Transverse colon (tissue), 4 donors: ENCODE measurements at regions of chr9 and their contacts with region 1.

Region 1: GRCh38 chr9:128034821-128035764 is 32.0 kb downstream of the NAIF1 start:
- DNase-seq: peak; percentile 75
- H3K4me3 ChIP-seq: no peak overlapping the region
- H3K27ac ChIP-seq: peak overlapping the region in 2 of 4 donors; percentile 18 to 25
- H3K4me1 ChIP-seq: peaks cover 0 to 27% (median 7%) of the 10 kb centered on the region in 4 donors
- H3K27me3 ChIP-seq: no peaks in the 10 kb centered on the region
- CTCF ChIP-seq: peak; percentile 88 to 98 (median 92)
- EP300 ChIP-seq: no peak
- POLR2A ChIP-seq: no peak

Region 2: GRCh38 chr9:127828262-127829031 is 206.6 kb before region 1 on chr9:
- in situ Hi-C with region 1: no loop called
- intact Hi-C with region 1: no loop called
- DNase-seq: peak; percentile 79
- H3K4me3 ChIP-seq: peak overlapping the region in 3 of 4 donors; percentile 6 to 35 (median 12)
- H3K27ac ChIP-seq: peak overlapping the region; percentile 73 to 79 (median 77)
- H3K4me1 ChIP-seq: peaks cover 0 to 42% (median 13%) of the 10 kb centered on the region in 4 donors
- H3K27me3 ChIP-seq: peaks cover 14% of the 10 kb centered on the region
- CTCF ChIP-seq: no peak
- EP300 ChIP-seq: no peak
- POLR2A ChIP-seq: peak; percentile 57

Region 3: GRCh38 chr9:127943731-127944144 is 91.4 kb before region 1 on chr9:
- in situ Hi-C with region 1: loop called (anchors 5 to 10 kb)
- intact Hi-C with region 1: loop called (anchors 1 kb)
- DNase-seq: peak; percentile 87
- H3K4me3 ChIP-seq: no peak overlapping the region
- H3K27ac ChIP-seq: peak overlapping the region in 3 of 4 donors; percentile 2 to 37 (median 35)
- H3K4me1 ChIP-seq: peaks cover 0 to 5% (median 0%) of the 10 kb centered on the region in 4 donors
- H3K27me3 ChIP-seq: no peaks in the 10 kb centered on the region
- CTCF ChIP-seq: peak; percentile 89 to 97 (median 94)
- EP300 ChIP-seq: no peak
- POLR2A ChIP-seq: no peak

Region 4: GRCh38 chr9:127949827-127950512 is 85.1 kb before region 1 on chr9:
- in situ Hi-C with region 1: loop called (anchors 5 to 10 kb)
- intact Hi-C with region 1: no loop called
- DNase-seq: no peak
- H3K4me3 ChIP-seq: no peak overlapping the region
- H3K27ac ChIP-seq: peak overlapping the region in 3 of 4 donors; percentile 27 to 53 (median 31)
- H3K4me1 ChIP-seq: peaks cover 26 to 46% (median 27%) of the 10 kb centered on the region in 4 donors
- H3K27me3 ChIP-seq: no peaks in the 10 kb centered on the region
- CTCF ChIP-seq: no peak
- EP300 ChIP-seq: no peak
- POLR2A ChIP-seq: no peak

Region 5: DNA sequence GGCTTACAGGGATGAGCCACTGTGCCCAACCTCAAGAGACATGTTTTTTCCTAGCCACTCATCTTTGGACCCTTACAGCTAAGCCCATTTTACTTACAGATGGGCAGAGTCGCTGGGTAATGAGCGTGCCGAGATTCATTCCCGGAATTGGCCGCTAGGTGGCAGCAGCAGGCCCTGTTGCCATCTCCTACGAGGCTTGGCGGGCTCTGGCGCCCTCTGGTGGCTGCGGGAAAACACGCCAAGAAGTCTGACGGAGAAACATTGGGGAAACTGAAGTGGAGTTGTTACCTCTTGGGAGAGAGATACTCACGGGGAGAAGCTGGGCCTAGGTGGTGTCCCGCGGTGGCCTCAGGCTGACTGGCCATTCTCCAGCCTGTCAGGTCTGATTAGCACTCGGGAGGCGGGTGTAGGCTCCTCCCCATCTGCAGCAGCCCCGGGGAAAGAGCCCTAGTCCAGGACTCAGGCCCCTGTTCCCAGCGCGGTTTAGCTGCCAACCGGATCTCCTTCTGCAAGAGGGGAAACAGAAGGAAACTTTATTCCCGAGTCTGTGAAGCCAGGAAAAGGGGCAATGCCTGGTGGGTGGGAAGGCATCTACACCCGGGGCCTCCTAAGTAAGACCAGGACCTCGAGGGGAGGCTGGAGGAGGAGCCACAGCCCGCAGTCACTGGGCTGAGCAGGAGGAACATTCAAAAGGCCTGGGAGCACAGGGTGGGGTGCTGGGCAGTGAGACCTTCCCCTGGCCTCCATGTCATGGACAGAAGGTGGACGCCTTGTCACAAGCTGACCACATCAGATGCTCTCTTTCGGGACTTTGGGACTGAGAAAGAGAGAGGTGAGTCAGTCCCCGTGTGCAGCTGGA is 82.7 kb after region 1 on chr9:
- in situ Hi-C with region 1: no loop called
- intact Hi-C with region 1: loop called (anchors 10 kb)
- DNase-seq: peak; percentile 97
- H3K4me3 ChIP-seq: no peak overlapping the region
- H3K27ac ChIP-seq: peak overlapping the region; percentile 84 to 96 (median 94)
- H3K4me1 ChIP-seq: peaks cover 3 to 32% (median 27%) of the 10 kb centered on the region in 4 donors
- H3K27me3 ChIP-seq: no peaks in the 10 kb centered on the region
- CTCF ChIP-seq: peak; percentile 100
- EP300 ChIP-seq: no peak
- POLR2A ChIP-seq: no peak

Region 6: DNA sequence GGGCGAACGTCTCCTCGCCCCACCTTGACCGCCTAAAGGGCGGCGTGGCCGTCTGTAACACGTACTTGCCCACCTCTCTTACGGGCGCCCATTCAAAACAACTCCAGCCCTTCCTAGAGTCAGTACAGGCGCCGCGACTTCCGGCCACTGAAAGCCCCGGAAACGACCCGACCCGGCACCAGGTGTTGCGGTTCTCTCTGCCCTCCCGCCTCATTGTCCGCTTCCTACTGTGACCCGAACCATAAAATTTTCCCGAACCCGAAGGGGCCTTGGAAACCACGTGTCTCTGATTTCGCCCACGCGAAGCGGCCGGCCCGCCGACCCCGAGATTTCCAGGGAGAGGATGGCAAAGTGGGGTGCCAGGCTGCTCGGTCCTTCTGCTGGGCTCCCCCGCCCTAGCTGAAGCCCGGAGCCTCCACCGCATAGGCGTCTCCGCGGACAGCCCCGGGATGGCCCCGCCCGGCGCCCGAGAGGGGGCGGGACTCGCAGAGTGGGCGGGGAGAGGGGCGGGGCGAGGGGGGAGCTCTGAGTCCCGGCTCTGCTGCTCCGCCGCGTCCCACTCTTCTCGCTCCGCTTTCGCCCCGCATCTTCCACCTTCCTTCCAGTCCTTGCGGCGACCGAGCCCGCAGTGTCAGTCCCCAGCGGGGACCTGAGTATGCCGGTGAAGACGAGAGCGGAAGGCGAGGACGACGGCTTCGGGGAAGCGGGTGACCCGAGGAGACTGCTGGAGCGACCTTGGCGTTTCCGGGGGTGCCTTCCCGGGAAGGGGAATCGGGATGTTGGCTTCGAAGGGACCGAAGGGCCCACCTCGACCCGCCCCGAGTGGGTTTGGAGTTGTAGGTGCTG is 93.1 kb after region 1 on chr9:
- in situ Hi-C with region 1: loop called in 1 of 4 experiments (anchors 25 kb)
- intact Hi-C with region 1: no loop called
- DNase-seq: peak; percentile 85
- H3K4me3 ChIP-seq: peak overlapping the region; percentile 84 to 96 (median 94)
- H3K27ac ChIP-seq: peak overlapping the region; percentile 94 to 98 (median 96)
- H3K4me1 ChIP-seq: peaks cover 14 to 40% (median 29%) of the 10 kb centered on the region in 4 donors
- H3K27me3 ChIP-seq: no peaks in the 10 kb centered on the region
- CTCF ChIP-seq: no peak
- EP300 ChIP-seq: no peak
- POLR2A ChIP-seq: peak; percentile 68